SK-N-SH (cell line): ENCODE measurements at regions of chr17 and their contacts with region 1.

Region 1: GRCh38 chr17:67707442-67707841 is 10.3 kb upstream of the NOL11 start:
- DNase-seq: peak; percentile 34
- H3K4me3 ChIP-seq: no peak overlapping the region
- H3K27ac ChIP-seq: peak overlapping the region in 1 of 2 experiments; percentile 16; a peak in 2 of 4 replicates
- H3K4me1 ChIP-seq: peaks cover 0 to 3% of the 10 kb centered on the region in 2 experiments; a peak in 1 of 4 replicates
- H3K27me3 ChIP-seq: no peaks in the 10 kb centered on the region
- CTCF ChIP-seq: no peak
- EP300 ChIP-seq: no peak
- RAD21 ChIP-seq: no peak

Region 2: GRCh38 chr17:67647482-67647881 is 60.0 kb before region 1 on chr17:
- CTCF ChIA-PET with region 1: no interaction called
- POLR2A ChIA-PET with region 1: no interaction called
- DNase-seq: no peak
- H3K4me3 ChIP-seq: no peak overlapping the region
- H3K27ac ChIP-seq: no peak overlapping the region
- H3K4me1 ChIP-seq: peaks cover 0 to 7% of the 10 kb centered on the region in 2 experiments; a peak in 1 of 4 replicates
- H3K27me3 ChIP-seq: no peaks in the 10 kb centered on the region
- CTCF ChIP-seq: no peak
- EP300 ChIP-seq: no peak
- RAD21 ChIP-seq: no peak

Region 3: DNA sequence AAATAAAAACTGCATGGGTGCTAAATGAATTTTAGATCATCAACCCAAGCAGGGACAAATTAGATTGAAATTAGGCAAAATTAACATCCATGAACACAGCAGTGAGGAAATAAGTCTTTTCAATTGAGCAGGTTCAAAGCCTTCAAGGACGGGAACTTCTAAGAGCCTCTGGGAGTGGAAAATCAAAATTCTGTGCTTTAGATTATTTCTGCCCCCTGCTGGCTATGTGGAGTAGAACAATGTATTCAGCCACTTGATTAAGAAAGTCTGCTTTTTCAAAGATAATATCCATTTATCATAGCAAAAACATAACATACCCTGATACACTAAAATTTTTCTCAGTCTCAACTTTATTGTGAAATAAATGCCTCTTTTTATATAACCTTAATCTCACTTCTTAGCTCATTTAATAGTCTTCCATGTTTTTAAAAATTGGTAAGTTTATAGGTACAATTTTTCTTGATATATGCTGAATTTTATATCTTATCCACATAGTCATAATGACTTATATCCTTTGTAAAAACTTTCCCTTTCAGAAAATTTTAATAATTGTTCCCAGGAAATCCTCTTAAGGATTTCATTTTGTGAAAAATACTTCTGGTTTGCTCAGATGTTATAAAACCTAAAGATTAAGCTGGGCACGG is 17.8 kb before region 1 on chr17:
- CTCF ChIA-PET with region 1: interaction called, 44 read pairs
- POLR2A ChIA-PET with region 1: no interaction called
- DNase-seq: peak; percentile 77
- H3K4me3 ChIP-seq: no peak overlapping the region
- H3K27ac ChIP-seq: peak overlapping the region in 1 of 2 experiments; percentile 2; a peak in 1 of 4 replicates
- H3K4me1 ChIP-seq: no peaks in the 10 kb centered on the region
- H3K27me3 ChIP-seq: no peaks in the 10 kb centered on the region
- CTCF ChIP-seq: peak; percentile 99
- EP300 ChIP-seq: no peak
- RAD21 ChIP-seq: peak; percentile 93

Region 4: DNA sequence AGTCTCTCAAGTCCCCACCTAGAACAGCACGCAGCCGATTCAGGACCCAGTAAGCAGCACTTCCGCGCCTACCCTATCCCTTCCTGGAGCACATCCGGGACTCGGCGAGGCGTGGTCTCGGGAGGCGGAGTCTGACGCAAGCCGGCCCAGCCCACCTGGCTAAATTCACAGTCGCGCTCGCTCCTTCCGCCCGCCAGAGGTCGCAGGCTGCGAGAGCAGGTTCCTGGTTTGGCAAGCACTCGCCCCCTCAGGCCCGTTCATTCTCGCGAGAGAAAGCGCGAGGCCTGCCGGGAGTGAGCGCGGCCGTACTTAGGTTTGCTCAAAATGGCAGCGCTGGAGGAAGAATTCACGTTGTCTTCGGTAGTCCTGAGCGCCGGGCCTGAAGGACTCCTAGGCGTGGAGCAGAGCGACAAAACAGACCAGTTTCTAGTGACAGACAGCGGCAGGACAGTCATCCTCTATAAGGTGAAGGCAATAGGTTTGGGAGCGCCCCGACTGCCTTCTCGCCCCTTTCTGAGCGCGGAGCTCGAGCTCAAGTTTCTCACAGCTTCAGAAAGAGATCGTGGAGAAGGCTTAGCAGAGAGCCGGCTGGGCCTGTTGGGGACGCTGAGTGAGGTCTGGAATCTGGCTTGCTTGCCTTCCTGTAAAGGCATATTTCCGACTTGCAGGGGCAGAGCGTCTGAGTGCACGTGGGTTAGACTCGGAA is 10.3 kb after region 1 on chr17 and contains the start of gene NOL11:
- CTCF ChIA-PET with region 1: interaction called, 30 read pairs
- POLR2A ChIA-PET with region 1: interaction called, 3 read pairs
- DNase-seq: peak; percentile 99
- H3K4me3 ChIP-seq: peak within 1 kb of the TSS; percentile 94 to 96
- H3K27ac ChIP-seq: peak within 1 kb of the TSS; percentile 89 to 94
- H3K4me1 ChIP-seq: peaks cover 6 to 7% of the 10 kb centered on the region in 2 experiments; a peak in 3 of 4 replicates
- H3K27me3 ChIP-seq: no peaks in the 10 kb centered on the region
- CTCF ChIP-seq: peak; percentile 98
- EP300 ChIP-seq: peak in 1 of 2 experiments; percentile 28; a peak in 2 of 4 replicates
- RAD21 ChIP-seq: peak; percentile 70
- polyA plus RNA-seq, gene NOL11: 27.0 and 36.2 TPM in 2 replicates

Region 5: GRCh38 chr17:67730731-67731130 is 23.3 kb after region 1 on chr17:
- CTCF ChIA-PET with region 1: no interaction called
- POLR2A ChIA-PET with region 1: no interaction called
- DNase-seq: no peak
- H3K4me3 ChIP-seq: no peak overlapping the region
- H3K27ac ChIP-seq: no peak overlapping the region
- H3K4me1 ChIP-seq: no peaks in the 10 kb centered on the region
- H3K27me3 ChIP-seq: no peaks in the 10 kb centered on the region
- CTCF ChIP-seq: no peak
- EP300 ChIP-seq: no peak
- RAD21 ChIP-seq: no peak

Region 6: DNA sequence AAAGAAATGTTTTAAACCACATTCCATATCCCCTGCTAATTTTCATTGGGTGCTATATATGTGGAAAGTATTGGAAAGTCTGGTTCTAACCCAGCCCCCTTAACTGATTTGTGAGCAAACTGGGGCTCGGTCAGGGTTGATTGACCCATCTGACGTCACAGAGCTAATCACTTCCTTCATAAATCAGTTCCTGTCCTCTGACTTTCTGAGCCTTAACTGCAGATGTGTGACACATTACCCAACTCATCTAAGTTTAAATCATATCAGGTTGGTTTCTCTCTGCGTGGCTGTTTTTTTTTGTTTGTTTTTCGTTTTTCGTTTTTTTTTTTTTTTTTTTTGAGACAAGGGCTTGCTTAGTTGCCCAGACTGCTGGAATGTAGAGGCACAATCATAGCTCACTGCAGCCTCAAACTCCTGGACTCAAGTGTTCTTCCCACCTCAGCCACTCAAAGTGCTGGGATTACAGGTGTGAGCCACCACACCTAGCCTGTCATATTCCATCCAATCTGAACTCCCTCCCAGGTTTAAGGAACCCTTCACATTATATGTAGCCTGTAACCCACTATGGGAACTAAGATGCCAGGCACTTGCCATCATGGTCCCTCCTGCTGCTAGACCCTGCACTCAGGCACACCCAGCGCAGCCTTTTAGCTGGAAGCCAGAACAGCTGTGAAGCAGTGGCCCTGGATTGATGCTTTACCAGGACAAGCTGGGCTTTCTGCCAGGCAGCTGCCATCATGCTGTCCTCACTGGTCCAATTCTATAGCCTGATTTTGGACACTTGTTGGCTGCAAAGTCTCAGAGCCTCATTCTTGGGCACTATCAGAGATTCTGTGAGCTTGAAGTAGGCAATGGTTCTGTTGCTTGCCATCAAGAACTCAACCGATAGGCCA is 110.9 kb after region 1 on chr17:
- CTCF ChIA-PET with region 1: no interaction called
- POLR2A ChIA-PET with region 1: no interaction called
- DNase-seq: no peak
- H3K4me3 ChIP-seq: no peak overlapping the region
- H3K27ac ChIP-seq: no peak overlapping the region
- H3K4me1 ChIP-seq: no peaks in the 10 kb centered on the region
- H3K27me3 ChIP-seq: no peaks in the 10 kb centered on the region
- CTCF ChIP-seq: no peak
- EP300 ChIP-seq: no peak
- RAD21 ChIP-seq: no peak